Esophagus muscularis mucosa (tissue), 4 donors: ENCODE measurements at regions of chr18 and their contacts with region 1.

Region 1: GRCh38 chr18:45879681-45880655 is 54.5 kb downstream of the SIGLEC15 start:
- DNase-seq: no peak
- H3K4me3 ChIP-seq: no peak overlapping the region
- H3K27ac ChIP-seq: no peak overlapping the region
- H3K4me1 ChIP-seq: peaks cover 0 to 10% (median 7%) of the 10 kb centered on the region in 4 donors
- H3K27me3 ChIP-seq: no peaks in the 10 kb centered on the region
- CTCF ChIP-seq: peak in 2 of 3 experiments; percentile 96 to 98
- EP300 ChIP-seq: no peak
- POLR2A ChIP-seq: no peak

Region 2: GRCh38 chr18:45621061-45621511 is 258.9 kb before region 1 on chr18:
- intact Hi-C with region 1: loop called (anchors 5 kb)
- DNase-seq: no peak
- H3K4me3 ChIP-seq: no peak overlapping the region
- H3K27ac ChIP-seq: no peak overlapping the region
- H3K4me1 ChIP-seq: peaks cover 11 to 65% (median 48%) of the 10 kb centered on the region in 4 donors
- H3K27me3 ChIP-seq: no peaks in the 10 kb centered on the region
- CTCF ChIP-seq: peak in 2 of 3 experiments; percentile 94 to 95
- EP300 ChIP-seq: no peak
- POLR2A ChIP-seq: no peak

Region 3: GRCh38 chr18:45690975-45691815 is 188.8 kb before region 1 on chr18:
- intact Hi-C with region 1: loop called (anchors 2 kb)
- DNase-seq: no peak
- H3K4me3 ChIP-seq: no peak overlapping the region
- H3K27ac ChIP-seq: no peak overlapping the region
- H3K4me1 ChIP-seq: peaks cover 0 to 7% (median 7%) of the 10 kb centered on the region in 4 donors
- H3K27me3 ChIP-seq: no peaks in the 10 kb centered on the region
- CTCF ChIP-seq: peak; percentile 71 to 80 (median 78)
- EP300 ChIP-seq: no peak
- POLR2A ChIP-seq: no peak

Region 4: GRCh38 chr18:45820106-45820745 is 59.7 kb before region 1 on chr18:
- intact Hi-C with region 1: no loop called
- DNase-seq: peak; percentile 85
- H3K4me3 ChIP-seq: no peak overlapping the region
- H3K27ac ChIP-seq: no peak overlapping the region
- H3K4me1 ChIP-seq: no peaks in the 10 kb centered on the region
- H3K27me3 ChIP-seq: no peaks in the 10 kb centered on the region
- CTCF ChIP-seq: no peak
- EP300 ChIP-seq: no peak
- POLR2A ChIP-seq: no peak

Region 5: GRCh38 chr18:45930963-45931362 is 51.0 kb after region 1 on chr18:
- intact Hi-C with region 1: no loop called
- DNase-seq: no peak
- H3K4me3 ChIP-seq: no peak overlapping the region
- H3K27ac ChIP-seq: no peak overlapping the region
- H3K4me1 ChIP-seq: no peaks in the 10 kb centered on the region
- H3K27me3 ChIP-seq: no peaks in the 10 kb centered on the region
- CTCF ChIP-seq: no peak
- EP300 ChIP-seq: no peak
- POLR2A ChIP-seq: no peak